ENCODE measurements at regions of chr17 and their contacts with region 1.

Region 1: GRCh38 chr17:61389670-61390478 is 9.8 kb upstream of the TBX2 start:
- DNase-seq: peak; percentile 39 to 63
- ATAC-seq: peak in 2 of 3 donors; percentile 55 to 69
- H3K4me3 ChIP-seq: no peak overlapping the region
- H3K4me3 Mint-ChIP-seq: no peak overlapping the region
- H3K27ac ChIP-seq: no peak overlapping the region
- H3K27ac Mint-ChIP-seq: no peak overlapping the region
- H3K4me1 ChIP-seq: peaks cover 6% of the 10 kb centered on the region
- H3K4me1 Mint-ChIP-seq: peaks cover 0 to 6% of the 10 kb centered on the region in 2 donors
- H3K27me3 ChIP-seq: no peaks in the 10 kb centered on the region
- H3K27me3 Mint-ChIP-seq: peaks cover 6% of the 10 kb centered on the region in 2 donors
- CTCF ChIP-seq: peak; percentile 82

Region 2: GRCh38 chr17:60720763-60721531 is 668.9 kb before region 1 on chr17:
- intact Hi-C with region 1: loop called (anchors 5 kb)
- DNase-seq: peak in 1 of 2 donors; percentile 79
- ATAC-seq: peak; percentile 42 to 72 (median 71)
- H3K4me3 ChIP-seq: no peak overlapping the region
- H3K4me3 Mint-ChIP-seq: no peak overlapping the region
- H3K27ac ChIP-seq: no peak overlapping the region
- H3K27ac Mint-ChIP-seq: no peak overlapping the region
- H3K4me1 ChIP-seq: no peaks in the 10 kb centered on the region
- H3K4me1 Mint-ChIP-seq: peaks cover 4 to 6% of the 10 kb centered on the region in 2 donors
- H3K27me3 ChIP-seq: no peaks in the 10 kb centered on the region
- H3K27me3 Mint-ChIP-seq: no peaks in the 10 kb centered on the region
- CTCF ChIP-seq: peak; percentile 98

Region 3: GRCh38 chr17:60971515-60972369 is 418.1 kb before region 1 on chr17:
- intact Hi-C with region 1: loop called (anchors 1 kb)
- DNase-seq: peak in 1 of 2 donors; percentile 67
- ATAC-seq: peak; percentile 56 to 76 (median 57)
- H3K4me3 ChIP-seq: no peak overlapping the region
- H3K4me3 Mint-ChIP-seq: no peak overlapping the region
- H3K27ac ChIP-seq: no peak overlapping the region
- H3K27ac Mint-ChIP-seq: no peak overlapping the region
- H3K4me1 ChIP-seq: no peaks in the 10 kb centered on the region
- H3K4me1 Mint-ChIP-seq: peaks cover 0 to 4% of the 10 kb centered on the region in 2 donors
- H3K27me3 ChIP-seq: no peaks in the 10 kb centered on the region
- H3K27me3 Mint-ChIP-seq: no peaks in the 10 kb centered on the region
- CTCF ChIP-seq: peak; percentile 65

Region 4: DNA sequence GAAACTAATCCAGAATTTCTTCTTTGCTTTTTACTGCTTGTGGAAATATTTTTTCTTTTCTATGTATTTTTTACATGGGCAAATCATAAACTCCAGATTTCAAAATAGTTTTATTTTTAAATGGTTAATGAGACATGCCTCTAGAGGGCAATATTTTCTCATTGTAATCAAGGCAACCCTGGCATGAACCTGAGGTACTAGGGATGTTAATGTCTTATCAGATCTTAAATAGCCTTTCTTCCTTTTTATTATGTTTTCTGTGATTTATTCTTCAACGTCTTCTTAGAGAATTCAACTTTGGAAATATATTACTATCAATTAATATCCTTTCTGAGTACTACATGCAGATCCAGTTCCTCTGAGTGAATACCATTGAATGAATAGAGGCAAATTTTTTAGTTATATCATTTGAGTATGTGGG is 387.5 kb before region 1 on chr17:
- intact Hi-C with region 1: loop called (anchors 2 kb)
- DNase-seq: peak in 1 of 2 donors; percentile 51
- ATAC-seq: peak in 1 of 3 donors; percentile 39
- H3K4me3 ChIP-seq: no peak overlapping the region
- H3K4me3 Mint-ChIP-seq: no peak overlapping the region
- H3K27ac ChIP-seq: no peak overlapping the region
- H3K27ac Mint-ChIP-seq: no peak overlapping the region
- H3K4me1 ChIP-seq: no peaks in the 10 kb centered on the region
- H3K4me1 Mint-ChIP-seq: no peaks in the 10 kb centered on the region
- H3K27me3 ChIP-seq: no peaks in the 10 kb centered on the region
- H3K27me3 Mint-ChIP-seq: no peaks in the 10 kb centered on the region
- CTCF ChIP-seq: peak; percentile 69

Region 5: DNA sequence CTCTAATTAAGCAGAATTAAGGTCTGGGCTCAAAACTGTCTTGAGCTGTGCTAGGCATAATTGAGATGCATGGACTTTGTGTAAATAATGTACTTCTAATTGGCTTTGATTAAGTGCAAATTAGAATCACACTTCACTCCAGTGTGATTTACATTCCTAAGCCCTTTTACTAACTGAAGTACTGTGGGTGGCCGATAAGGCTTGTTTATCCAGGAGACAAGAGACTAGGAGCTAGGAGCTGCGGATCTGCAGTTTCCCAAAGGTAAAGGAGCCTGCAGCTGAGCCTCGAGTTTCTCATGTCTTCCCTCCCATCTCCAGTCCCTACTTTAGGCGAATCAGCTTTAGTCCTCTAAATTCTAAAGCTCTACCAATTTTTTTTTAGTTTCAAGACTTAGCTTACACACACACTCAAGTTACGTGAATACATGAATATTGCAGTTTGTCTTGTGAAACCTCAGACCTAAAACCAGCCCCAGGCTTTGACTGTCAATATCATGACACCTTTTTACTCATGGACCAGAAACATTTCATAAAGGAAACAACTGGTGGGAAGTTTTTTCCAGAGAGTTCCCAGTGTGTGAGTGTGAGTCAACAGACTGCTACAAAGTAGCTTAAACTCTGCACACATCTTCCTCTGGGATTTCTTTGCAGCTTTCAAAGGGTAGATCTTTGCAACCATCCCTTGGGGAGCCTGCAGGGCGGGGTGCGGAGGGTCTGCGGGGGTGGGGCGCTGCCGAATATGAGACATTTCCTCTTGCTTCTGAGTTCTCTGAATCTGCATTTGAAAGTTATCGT is 104.2 kb before region 1 on chr17:
- intact Hi-C with region 1: no loop called
- DNase-seq: no peak
- ATAC-seq: peak; percentile 30 to 45 (median 43)
- H3K4me3 ChIP-seq: no peak overlapping the region
- H3K4me3 Mint-ChIP-seq: peak overlapping the region; percentile 25
- H3K27ac ChIP-seq: no peak overlapping the region
- H3K27ac Mint-ChIP-seq: peak overlapping the region in 1 of 2 donors; percentile 76
- H3K4me1 ChIP-seq: peaks cover 9% of the 10 kb centered on the region
- H3K4me1 Mint-ChIP-seq: peaks cover 33 to 44% of the 10 kb centered on the region in 2 donors
- H3K27me3 ChIP-seq: no peaks in the 10 kb centered on the region
- H3K27me3 Mint-ChIP-seq: no peaks in the 10 kb centered on the region
- CTCF ChIP-seq: no peak

Measured in natural killer cell (primary cell).